ENCODE measurements at regions of chr5 and their contacts with region 1.

Region 1: GRCh38 chr5:77491783-77492652 is at the start of gene WDR41:
- DNase-seq: peak; percentile 93
- ATAC-seq: peak; percentile 91
- H3K4me3 Mint-ChIP-seq: peak within 1 kb of the TSS; percentile 74
- H3K27ac Mint-ChIP-seq: peak within 1 kb of the TSS; percentile 84
- H3K4me1 Mint-ChIP-seq: peaks cover 21% of the 10 kb centered on the region
- H3K27me3 Mint-ChIP-seq: peaks cover 8% of the 10 kb centered on the region
- total RNA-seq, gene WDR41: 24.2 to 25.4 TPM

Region 2: DNA sequence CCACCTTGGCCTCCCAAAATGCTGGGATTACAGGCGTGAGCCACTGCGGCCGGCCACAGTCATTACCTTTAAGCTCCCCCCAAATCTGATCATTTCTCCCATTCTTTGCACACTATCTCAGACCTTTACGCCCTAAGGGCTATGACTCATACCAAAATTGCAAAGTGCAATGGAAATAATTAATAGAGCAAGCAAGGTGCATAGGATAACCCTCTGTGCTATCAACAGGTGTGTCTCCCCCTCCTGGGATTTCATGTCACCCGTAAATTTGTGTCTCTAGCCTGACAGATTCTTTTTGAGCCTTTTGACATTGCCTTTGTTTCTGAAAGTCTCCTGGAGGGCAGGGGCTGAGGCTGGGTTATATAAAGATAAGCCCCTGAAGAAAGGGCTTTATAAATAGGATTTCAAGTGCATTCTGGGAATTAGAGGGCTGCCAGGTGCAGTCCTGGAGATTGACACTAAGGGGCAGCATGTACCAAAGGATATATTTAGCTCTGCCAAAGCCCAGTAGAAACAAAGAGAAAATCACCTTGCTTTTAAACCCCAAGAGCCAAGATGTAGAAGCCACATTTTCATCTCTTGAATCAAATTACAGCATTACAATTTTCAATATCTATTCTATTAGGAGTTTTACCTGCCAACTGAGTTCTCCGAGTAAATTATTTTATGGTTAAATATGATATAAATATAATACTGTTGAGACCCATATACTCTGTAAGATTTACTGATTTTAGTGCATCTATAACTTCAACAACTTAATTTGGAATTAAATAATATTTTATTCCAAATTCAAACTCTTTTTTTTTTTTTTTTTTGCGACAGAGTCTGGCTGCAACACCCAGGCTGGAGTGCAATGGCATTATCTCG is 624.0 kb before region 1 on chr5:
- CTCF ChIA-PET with region 1: interaction called, 3 read pairs
- POLR2A ChIA-PET with region 1: no interaction called
- intact Hi-C with region 1: loop called (anchors 1 to 5 kb)
- DNase-seq: peak; percentile 77
- ATAC-seq: peak; percentile 74
- H3K4me3 Mint-ChIP-seq: no peak overlapping the region
- H3K27ac Mint-ChIP-seq: no peak overlapping the region
- H3K4me1 Mint-ChIP-seq: no peaks in the 10 kb centered on the region
- H3K27me3 Mint-ChIP-seq: no peaks in the 10 kb centered on the region

Region 3: DNA sequence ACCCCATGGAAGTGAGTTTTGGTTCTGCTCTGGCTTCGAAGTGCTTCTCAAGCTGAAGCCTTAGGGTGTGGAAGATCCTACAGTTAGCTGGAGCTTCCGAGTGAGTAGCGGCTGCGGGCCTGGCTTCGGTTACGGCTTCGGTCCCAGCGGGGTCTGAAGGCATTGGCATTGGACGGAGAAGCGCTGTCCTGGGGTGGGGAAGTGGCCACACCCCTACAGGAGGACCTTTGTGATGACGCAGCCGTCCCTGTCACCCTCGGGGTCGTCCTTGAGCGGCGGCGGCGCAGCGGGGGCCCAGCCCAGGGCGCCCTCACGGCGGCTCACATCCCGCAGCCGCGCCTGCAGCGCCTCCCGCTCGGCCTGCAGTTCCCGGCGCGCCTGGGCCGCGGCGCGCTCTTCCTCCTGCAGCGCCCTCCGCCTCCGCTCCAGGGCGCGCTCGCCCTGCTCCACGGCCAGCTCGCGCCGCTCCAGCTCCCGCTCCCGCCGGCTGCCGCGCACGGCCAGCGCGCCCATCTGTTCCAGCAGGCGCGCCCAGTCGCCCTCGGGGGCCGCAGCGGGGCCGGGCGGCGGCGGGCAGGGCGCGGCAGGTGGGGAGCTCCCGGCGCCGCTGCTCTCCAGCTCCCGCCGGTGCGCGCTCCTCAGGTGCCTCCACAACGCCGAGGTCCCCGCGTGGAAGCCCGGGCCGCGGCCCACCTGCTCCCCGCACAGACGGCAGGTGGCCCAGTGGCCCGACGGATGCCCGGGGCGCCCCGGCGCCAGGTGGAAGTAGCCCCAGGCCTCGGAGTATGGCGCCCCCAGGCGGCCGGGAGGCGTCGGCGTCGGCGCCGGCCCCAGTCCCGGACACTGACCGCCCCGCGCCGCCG is 414.8 kb before region 1 on chr5:
- CTCF ChIA-PET with region 1: no interaction called
- POLR2A ChIA-PET with region 1: interaction called, 3 read pairs
- intact Hi-C with region 1: loop called in 1 of 2 experiments (anchors 1 kb)
- DNase-seq: peak; percentile 82
- ATAC-seq: peak; percentile 84
- H3K4me3 Mint-ChIP-seq: peak overlapping the region; percentile 31
- H3K27ac Mint-ChIP-seq: no peak overlapping the region
- H3K4me1 Mint-ChIP-seq: peaks cover 11% of the 10 kb centered on the region
- H3K27me3 Mint-ChIP-seq: no peaks in the 10 kb centered on the region

Region 4: GRCh38 chr5:77143998-77144836 is 347.8 kb before region 1 on chr5:
- CTCF ChIA-PET with region 1: interaction called, 39 read pairs
- POLR2A ChIA-PET with region 1: no interaction called
- intact Hi-C with region 1: loop called (anchors 1 kb)
- DNase-seq: peak; percentile 81
- ATAC-seq: peak; percentile 66
- H3K4me3 Mint-ChIP-seq: no peak overlapping the region
- H3K27ac Mint-ChIP-seq: no peak overlapping the region
- H3K4me1 Mint-ChIP-seq: peaks cover 11% of the 10 kb centered on the region
- H3K27me3 Mint-ChIP-seq: peaks cover 6% of the 10 kb centered on the region

Region 5: DNA sequence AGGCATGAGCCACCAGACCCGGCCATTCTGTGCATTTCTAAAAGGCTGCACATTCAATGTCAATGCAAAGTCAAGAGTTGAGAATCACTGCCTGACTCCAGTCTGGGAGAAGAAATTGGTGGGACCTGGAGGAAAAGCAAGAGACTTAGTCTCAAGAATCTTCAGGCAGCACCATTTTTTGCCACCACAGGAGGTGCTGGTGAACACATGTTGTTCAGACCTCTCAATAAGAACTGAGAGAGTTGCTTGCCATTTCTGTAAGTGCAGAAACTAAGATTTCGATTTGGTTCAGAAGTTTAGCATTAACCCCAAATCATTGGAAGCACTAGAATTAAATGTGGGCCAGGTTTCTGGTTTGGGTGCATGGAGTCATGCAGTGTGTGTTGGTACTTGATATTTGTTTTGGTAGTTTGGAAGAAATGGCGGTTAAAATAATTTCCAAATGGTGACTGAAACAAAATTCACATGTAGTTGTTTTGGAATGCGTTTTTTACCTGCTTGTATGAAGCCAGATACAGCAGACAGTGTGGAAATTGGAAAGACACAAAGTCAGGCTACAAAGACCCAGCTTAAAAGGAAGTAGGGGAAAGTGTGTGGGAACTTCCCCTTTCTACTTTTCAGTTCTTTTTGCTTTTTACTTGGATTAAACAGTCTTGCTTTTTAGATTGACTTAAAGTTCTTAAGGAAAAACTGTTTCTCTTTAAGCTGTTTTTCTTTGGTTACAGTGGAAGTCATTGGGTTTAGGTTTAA is 261.1 kb before region 1 on chr5:
- CTCF ChIA-PET with region 1: interaction called, 3 read pairs
- POLR2A ChIA-PET with region 1: no interaction called
- intact Hi-C with region 1: loop called in 1 of 2 experiments (anchors 1 kb)
- DNase-seq: no peak
- ATAC-seq: no peak
- H3K4me3 Mint-ChIP-seq: no peak overlapping the region
- H3K27ac Mint-ChIP-seq: no peak overlapping the region
- H3K4me1 Mint-ChIP-seq: peaks cover 7% of the 10 kb centered on the region
- H3K27me3 Mint-ChIP-seq: peaks cover 17% of the 10 kb centered on the region

Region 6: GRCh38 chr5:77379558-77380061 is 112.4 kb before region 1 on chr5:
- CTCF ChIA-PET with region 1: interaction called, 4 read pairs
- POLR2A ChIA-PET with region 1: no interaction called
- intact Hi-C with region 1: loop called (anchors 1 to 5 kb)
- DNase-seq: peak; percentile 78
- ATAC-seq: peak; percentile 95
- H3K4me3 Mint-ChIP-seq: no peak overlapping the region
- H3K27ac Mint-ChIP-seq: peak overlapping the region; percentile 55
- H3K4me1 Mint-ChIP-seq: peaks cover 31% of the 10 kb centered on the region
- H3K27me3 Mint-ChIP-seq: peaks cover 6% of the 10 kb centered on the region

Region 7: GRCh38 chr5:77785229-77785628 is 293.2 kb after region 1 on chr5:
- CTCF ChIA-PET with region 1: no interaction called
- POLR2A ChIA-PET with region 1: no interaction called
- intact Hi-C with region 1: no loop called
- DNase-seq: no peak
- ATAC-seq: no peak
- H3K4me3 Mint-ChIP-seq: no peak overlapping the region
- H3K27ac Mint-ChIP-seq: no peak overlapping the region
- H3K4me1 Mint-ChIP-seq: no peaks in the 10 kb centered on the region
- H3K27me3 Mint-ChIP-seq: no peaks in the 10 kb centered on the region

Region 8: GRCh38 chr5:78359831-78360673 is 868.0 kb after region 1 on chr5 and contains the start of gene SCAMP1:
- CTCF ChIA-PET with region 1: no interaction called
- POLR2A ChIA-PET with region 1: no interaction called
- intact Hi-C with region 1: loop called in 1 of 2 experiments (anchors 5 kb)
- DNase-seq: peak; percentile 95
- ATAC-seq: peak; percentile 94
- H3K4me3 Mint-ChIP-seq: peak within 1 kb of the TSS; percentile 94
- H3K27ac Mint-ChIP-seq: peak within 1 kb of the TSS; percentile 97
- H3K4me1 Mint-ChIP-seq: peaks cover 35% of the 10 kb centered on the region
- H3K27me3 Mint-ChIP-seq: no peaks in the 10 kb centered on the region
- total RNA-seq, gene SCAMP1: 15.5 to 24.1 TPM

Measured in activated CD4-positive, alpha-beta T cell treated with anti-CD3 and anti-CD28 coated beads for 36 hours (primary cell).